ENCODE measurements at regions of chr1 and their contacts with region 1.

Region 1: GRCh38 chr1:244599937-244600350 is 53.0 kb upstream of the DESI2 start:
- DNase-seq: peak; percentile 83
- H3K4me3 Mint-ChIP-seq: peak overlapping the region; percentile 70
- H3K27ac Mint-ChIP-seq: peak overlapping the region; percentile 92
- H3K4me1 Mint-ChIP-seq: peaks cover 20% of the 10 kb centered on the region
- H3K27me3 Mint-ChIP-seq: peaks cover 3% of the 10 kb centered on the region

Region 2: DNA sequence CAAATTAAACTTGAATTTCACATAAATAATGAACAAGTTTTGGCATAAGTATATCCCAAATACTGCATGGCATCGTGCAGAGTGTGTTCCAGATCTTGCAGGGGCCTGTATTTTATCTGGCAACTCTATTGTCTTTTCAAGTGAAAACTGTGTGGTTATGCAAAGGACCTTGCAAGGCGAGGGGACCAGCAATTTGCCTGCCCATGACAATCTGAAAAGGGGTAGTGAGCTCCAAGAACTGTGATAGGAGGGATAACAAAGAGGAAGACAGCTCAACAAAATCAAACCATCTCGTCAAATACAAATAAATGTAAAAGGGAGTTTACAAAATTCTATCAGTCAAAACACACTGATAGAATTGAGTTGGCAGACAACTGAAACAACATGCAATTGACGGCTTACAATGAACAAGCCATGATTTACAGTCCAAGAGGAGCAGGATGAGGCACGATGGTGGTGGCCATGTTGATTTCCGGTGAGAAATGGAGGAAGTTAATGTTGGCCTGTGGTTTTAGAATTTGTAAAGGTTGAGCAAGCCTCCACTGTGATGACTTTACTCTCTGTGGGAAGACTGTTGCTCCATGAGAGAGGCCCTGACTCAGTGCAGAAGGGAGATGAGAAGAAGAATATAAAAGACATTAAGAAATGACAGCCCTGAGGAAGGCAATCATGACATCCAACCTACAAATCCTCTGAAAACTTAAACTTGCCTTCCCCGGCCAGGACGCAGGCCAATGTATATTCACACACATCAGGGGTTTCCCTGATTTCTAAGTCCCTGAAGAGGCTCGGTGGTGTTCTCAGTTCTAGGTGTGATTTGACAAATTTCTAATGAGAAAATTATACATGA is 280.4 kb before region 1 on chr1:
- intact Hi-C with region 1: loop called (anchors 1 kb)
- DNase-seq: peak; percentile 85
- H3K4me3 Mint-ChIP-seq: peak overlapping the region; percentile 60
- H3K27ac Mint-ChIP-seq: peak overlapping the region; percentile 84
- H3K4me1 Mint-ChIP-seq: peaks cover 43% of the 10 kb centered on the region
- H3K27me3 Mint-ChIP-seq: no peaks in the 10 kb centered on the region

Region 3: DNA sequence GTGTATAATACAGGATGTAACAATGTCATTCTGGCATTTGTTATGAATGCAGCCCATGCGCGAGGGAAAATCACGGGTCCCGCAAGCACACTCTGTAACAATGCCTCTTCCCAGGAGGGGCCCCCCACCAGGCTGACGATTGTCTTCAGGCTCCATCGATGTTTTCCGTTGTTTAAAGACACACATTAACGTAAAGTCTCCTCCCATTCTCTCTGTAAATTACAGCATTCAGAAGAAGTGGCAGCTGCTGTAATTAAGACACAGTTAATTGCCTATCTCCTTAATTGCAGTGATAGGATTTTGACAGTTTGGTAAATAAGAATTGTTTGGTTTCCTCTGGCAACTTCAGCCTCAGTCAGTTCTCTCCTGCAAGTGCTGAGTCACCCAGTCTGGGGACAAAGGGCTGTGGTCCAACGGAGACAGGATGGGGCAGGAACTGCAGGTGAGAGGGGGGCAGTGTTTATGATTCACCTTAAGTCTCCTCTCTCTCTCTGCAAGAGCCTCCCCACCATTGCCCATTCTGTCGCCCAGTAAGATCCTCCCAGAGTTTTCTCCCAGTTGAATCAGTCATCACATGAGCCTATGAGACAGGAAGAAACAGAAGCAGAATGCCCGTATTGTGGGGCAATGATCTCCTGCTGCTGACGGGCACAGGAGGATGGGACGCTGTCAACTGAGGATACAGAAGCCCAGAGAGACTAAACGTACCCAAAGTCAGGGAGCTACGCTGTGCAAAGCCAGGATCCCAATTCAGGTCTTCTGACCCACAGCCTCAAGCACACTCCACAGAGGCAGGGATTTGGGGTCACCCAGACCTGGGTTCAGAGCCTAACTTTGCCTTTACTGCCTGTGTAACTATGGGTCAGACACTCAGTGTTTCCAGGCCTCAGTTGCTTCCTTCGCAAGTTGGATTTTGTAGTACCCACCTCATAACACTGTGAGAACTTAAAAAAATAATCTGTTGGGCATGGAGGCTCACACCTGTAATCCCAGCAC is 258.2 kb before region 1 on chr1:
- intact Hi-C with region 1: no loop called
- DNase-seq: peak; percentile 76
- H3K4me3 Mint-ChIP-seq: peak overlapping the region; percentile 13
- H3K27ac Mint-ChIP-seq: peak overlapping the region; percentile 41
- H3K4me1 Mint-ChIP-seq: peaks cover 25% of the 10 kb centered on the region
- H3K27me3 Mint-ChIP-seq: no peaks in the 10 kb centered on the region

Region 4: DNA sequence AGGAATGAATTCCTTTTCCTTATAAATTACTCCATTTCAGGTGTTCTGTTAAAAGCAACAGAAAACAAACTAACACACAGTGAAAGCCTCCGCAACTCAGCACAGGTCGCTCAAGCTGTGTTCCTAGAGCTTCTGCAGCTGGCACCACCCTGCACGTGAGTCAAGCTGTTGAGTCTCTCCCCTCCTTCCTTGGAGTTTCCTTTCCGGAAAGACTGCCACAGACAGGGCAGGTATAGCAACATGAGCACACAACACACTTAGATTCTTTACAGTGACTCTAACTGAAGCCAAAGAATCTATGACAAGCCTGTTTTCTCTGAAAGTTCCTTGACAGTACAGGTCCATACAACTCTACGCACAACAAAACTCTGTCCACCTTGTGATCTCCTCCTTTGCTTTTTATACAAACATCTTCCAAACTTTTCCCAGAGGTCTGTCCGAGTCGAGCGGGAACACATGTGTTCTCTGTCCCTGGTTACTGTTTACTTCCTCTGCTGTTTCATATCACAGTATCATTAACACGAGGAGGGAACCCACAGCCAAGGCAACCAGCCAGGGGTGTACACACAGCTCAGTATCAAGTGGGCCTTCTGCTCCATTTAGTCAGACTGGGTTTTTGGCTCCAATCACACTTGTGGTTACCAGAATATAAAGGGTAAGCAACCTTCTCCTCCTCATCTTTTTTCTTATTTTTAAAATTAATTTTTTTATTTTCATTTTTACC is 14.3 kb after region 1 on chr1:
- intact Hi-C with region 1: no loop called
- DNase-seq: no peak
- H3K4me3 Mint-ChIP-seq: no peak overlapping the region
- H3K27ac Mint-ChIP-seq: no peak overlapping the region
- H3K4me1 Mint-ChIP-seq: no peaks in the 10 kb centered on the region
- H3K27me3 Mint-ChIP-seq: peaks cover 10% of the 10 kb centered on the region

Region 5: DNA sequence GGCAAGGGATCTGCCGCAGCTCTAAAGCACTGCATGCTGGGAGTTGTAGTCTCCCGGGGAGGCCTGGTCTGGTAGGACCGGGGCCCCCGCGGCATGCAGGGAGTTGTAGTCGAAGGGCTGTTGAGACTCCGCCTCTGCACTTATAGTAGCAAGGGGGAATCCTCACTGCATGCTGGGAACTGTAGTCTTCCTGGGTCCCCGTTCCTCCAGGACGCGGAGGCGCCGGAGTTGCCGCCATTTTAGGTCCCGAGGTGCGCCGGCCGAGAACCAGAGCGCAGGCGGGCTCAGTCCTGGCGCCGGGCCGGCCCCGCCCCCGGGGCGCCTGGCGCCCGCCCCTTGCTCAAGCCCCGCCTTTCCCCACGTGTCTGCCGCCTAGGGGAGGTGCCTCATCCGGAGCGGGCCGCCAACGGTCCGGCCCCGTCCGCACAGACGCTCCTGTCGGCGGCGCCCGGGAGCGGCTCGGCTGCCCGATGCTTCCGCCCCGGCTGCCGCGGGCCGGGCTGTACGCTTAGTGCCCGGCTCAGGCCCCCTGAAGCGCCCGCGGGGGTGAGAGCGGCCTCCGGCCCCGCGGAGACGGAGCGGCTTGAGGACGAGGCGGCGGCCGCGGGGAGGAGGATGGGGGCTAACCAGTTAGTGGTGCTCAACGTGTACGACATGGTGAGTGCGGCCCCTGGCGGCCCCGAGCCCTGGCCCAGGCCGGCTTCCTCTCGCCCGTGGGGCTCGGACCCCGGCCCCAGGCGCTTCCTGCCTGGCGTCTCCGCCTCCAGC is 52.9 kb after region 1 on chr1 and contains the start of gene DESI2:
- intact Hi-C with region 1: loop called (anchors 1 kb)
- DNase-seq: peak; percentile 99
- H3K4me3 Mint-ChIP-seq: peak within 1 kb of the TSS; percentile 82
- H3K27ac Mint-ChIP-seq: peak within 1 kb of the TSS; percentile 84
- H3K4me1 Mint-ChIP-seq: peaks cover 23% of the 10 kb centered on the region
- H3K27me3 Mint-ChIP-seq: no peaks in the 10 kb centered on the region
- total RNA-seq, gene DESI2: 32.3 and 33.1 TPM in 2 replicates

Region 6: DNA sequence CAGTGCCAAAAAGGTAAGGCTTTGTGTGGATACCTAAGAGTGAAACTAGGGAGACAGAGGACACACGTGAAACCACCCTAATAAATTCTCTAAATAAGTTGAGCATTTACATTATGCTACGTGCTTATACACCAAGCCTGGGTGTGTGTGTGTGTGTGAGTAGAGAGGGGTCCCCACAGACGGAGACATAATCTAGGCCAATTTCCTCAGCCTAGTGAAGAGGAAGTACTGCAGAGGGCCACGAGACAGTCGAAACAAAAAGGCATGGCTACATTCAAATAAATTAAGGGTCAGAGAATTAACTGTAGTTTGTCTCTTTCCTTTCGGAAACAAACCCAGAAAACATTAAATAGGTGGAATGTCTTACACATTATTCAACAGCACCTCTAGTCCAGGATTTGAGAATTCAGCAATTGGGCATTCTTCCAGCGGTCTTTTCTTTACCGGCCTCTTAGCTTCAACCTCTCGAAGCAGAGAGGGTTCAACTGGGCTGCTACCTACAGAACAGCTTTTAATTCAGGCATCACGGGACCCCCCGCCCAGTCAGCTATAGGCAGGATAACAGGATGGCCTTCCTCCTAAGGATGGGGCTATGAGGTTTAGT is 128.0 kb after region 1 on chr1:
- intact Hi-C with region 1: loop called (anchors 5 kb)
- DNase-seq: no peak
- H3K4me3 Mint-ChIP-seq: no peak overlapping the region
- H3K27ac Mint-ChIP-seq: no peak overlapping the region
- H3K4me1 Mint-ChIP-seq: peaks cover 12% of the 10 kb centered on the region
- H3K27me3 Mint-ChIP-seq: peaks cover 28% of the 10 kb centered on the region

Region 7: GRCh38 chr1:244835276-244836134 is 235.6 kb after region 1 on chr1 and contains the start of gene COX20:
- intact Hi-C with region 1: loop called (anchors 1 kb)
- DNase-seq: peak; percentile 97
- H3K4me3 Mint-ChIP-seq: peak within 1 kb of the TSS; percentile 91
- H3K27ac Mint-ChIP-seq: peak within 1 kb of the TSS; percentile 99
- H3K4me1 Mint-ChIP-seq: peaks cover 43% of the 10 kb centered on the region
- H3K27me3 Mint-ChIP-seq: no peaks in the 10 kb centered on the region
- total RNA-seq, gene COX20: 28.6 and 30.0 TPM in 2 replicates

Region 8: DNA sequence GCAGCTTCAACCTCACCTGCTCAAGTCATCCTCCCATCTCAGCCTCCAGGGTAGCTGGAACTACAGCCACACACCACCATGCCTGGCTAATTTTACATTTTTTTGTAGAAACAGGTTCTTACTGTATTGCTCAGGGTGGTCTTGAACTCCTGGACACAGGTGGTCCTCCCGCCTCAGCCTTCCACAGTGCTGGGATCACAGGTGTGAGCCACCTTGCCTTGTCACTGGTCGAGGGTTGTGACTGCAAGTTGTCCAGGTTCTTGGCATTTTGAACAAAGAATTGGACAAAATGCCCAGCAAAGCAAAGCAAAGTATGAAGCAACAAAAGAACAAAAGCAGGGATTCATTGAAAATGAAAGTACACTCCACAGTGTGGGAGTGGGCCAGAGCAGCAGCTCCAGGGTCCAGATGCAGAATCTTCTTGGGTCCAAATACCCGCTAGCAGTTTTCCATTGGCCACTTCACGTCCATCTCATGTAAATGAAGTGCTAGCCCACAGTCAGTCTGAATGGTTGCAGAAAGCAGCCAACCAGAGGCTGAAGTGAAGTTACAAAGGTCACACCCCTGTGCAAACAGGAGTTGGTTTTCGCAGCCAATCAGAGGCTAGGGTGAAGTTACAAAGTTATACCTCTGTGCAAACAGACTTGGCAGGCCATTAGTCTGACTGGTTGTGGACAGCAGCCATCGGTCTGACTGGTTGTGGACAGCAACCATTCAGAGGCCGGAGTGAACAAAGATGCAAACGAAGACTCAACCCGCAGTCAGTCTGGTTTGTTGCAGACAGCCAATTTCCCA is 445.3 kb after region 1 on chr1:
- intact Hi-C with region 1: loop called (anchors 1 kb)
- DNase-seq: no peak
- H3K4me3 Mint-ChIP-seq: no peak overlapping the region
- H3K27ac Mint-ChIP-seq: no peak overlapping the region
- H3K4me1 Mint-ChIP-seq: no peaks in the 10 kb centered on the region
- H3K27me3 Mint-ChIP-seq: peaks cover 2% of the 10 kb centered on the region